ENCODE measurements at regions of chr7 and their contacts with region 1.

Region 1: GRCh38 chr7:27739909-27740448 is at the start of gene TAX1BP1:
- DNase-seq: peak; percentile 99
- total RNA-seq, gene TAX1BP1: 93.0 to 131 TPM

Region 2: GRCh38 chr7:27677912-27678612 is 61.9 kb before region 1 on chr7:
- intact Hi-C with region 1: loop called in 1 of 2 experiments (anchors 10 kb)
- DNase-seq: no peak

Measured in posterior vena cava (tissue), 2 donors.